CD4-positive, alpha-beta memory T cell (primary cell): ENCODE measurements at regions of chr7 and their contacts with region 1.

Region 1: DNA sequence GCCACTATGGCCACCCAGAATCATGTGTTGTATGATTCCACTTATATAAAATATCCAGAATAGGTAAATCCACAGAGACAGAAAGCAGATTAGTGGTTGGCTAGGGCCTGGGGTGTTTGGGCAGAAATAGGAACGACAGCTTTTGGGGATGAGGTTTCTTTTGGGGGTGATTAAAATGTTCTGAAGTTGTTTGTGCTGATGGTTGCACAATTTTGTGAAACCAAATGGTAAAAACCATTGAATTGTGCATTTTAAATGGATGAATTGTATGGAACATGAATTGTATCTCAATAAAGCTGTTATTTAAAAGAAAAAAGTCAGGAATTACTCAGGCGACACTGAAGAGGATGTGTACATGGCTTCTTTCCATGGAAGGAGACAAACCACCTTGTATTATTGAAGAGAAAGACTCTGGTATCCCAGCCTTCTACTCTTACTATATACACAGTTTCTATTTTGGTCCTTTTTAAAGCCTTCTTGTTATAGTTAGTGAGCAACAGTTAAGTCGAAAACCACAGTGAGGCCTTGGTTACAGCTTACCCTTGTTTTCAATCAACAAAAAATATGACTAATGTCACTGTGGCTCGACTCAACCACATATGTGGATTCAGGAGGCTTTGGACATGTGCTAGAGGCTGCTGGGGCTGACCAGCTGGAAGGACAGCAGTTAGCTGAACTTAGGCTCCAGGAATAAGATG is 57.1 kb upstream of the KMT2E start:
- DNase-seq: peak; percentile 25 to 61 (median 39)
- H3K4me3 ChIP-seq: no peak overlapping the region
- H3K4me3 Mint-ChIP-seq: peak overlapping the region in 3 of 8 donors; percentile 10 to 60 (median 10)
- H3K27ac ChIP-seq: no peak overlapping the region
- H3K27ac Mint-ChIP-seq: peak overlapping the region; percentile 63 to 97 (median 94)
- H3K4me1 ChIP-seq: peaks cover 13% of the 10 kb centered on the region
- H3K4me1 Mint-ChIP-seq: peaks cover 13 to 19% (median 15%) of the 10 kb centered on the region in 4 donors
- H3K27me3 ChIP-seq: no peaks in the 10 kb centered on the region
- H3K27me3 Mint-ChIP-seq: no peaks in the 10 kb centered on the region

Region 2: GRCh38 chr7:104914421-104914820 is 42.5 kb before region 1 on chr7:
- CTCF ChIA-PET with region 1: no interaction called
- POLR2A ChIA-PET with region 1: no interaction called
- intact Hi-C with region 1: no loop called
- DNase-seq: no peak
- H3K4me3 ChIP-seq: no peak overlapping the region
- H3K4me3 Mint-ChIP-seq: no peak overlapping the region
- H3K27ac ChIP-seq: no peak overlapping the region
- H3K27ac Mint-ChIP-seq: no peak overlapping the region
- H3K4me1 ChIP-seq: no peaks in the 10 kb centered on the region
- H3K4me1 Mint-ChIP-seq: peaks cover 0 to 4% (median 0%) of the 10 kb centered on the region in 4 donors
- H3K27me3 ChIP-seq: peaks cover 4% of the 10 kb centered on the region
- H3K27me3 Mint-ChIP-seq: peaks cover 3 to 4% of the 10 kb centered on the region in 2 donors

Region 3: DNA sequence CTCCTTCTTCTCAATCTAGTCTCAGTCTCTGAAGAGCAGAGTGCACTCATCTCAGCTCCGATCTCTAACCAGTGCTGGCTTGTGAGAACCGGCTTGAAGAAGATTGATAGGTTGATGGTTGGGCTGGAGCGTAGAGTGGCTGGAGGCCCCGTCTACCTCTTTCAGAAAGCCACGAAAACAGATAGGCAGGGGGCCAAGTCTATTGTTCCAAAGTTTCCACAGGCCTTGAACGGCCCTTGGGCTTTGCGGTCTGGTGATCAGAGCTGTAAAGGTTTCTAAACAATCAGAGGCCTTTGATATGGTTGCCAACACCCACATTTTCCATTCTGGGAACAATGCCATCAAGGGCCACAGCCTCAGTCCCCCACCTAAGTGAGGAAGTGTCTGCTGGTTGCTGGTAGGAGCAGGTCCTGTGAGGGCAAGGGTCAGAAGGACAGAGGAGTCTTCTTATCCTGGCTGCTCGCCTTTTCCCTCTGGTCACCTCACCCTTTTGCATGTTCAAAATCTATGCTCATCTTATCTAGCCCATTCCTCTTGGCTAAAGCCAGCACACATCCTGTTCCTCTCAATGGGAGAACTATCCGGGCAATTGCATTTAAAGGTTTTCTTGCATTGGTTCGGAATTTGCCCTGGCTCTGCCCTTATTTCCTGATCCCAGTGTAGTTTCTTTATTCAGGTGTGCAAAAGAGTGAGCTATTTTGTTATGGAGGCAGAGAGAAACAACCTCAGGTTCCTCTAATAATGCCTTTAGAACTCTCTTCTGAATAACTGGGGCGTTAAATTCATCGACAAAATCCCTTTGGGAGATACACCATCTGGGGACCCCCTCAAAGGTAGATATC is 13.2 kb before region 1 on chr7:
- CTCF ChIA-PET with region 1: no interaction called
- POLR2A ChIA-PET with region 1: interaction called, 15 read pairs
- intact Hi-C with region 1: no loop called
- DNase-seq: peak; percentile 75 to 92 (median 81)
- H3K4me3 ChIP-seq: peak overlapping the region; percentile 1 to 15
- H3K4me3 Mint-ChIP-seq: peak overlapping the region; percentile 82 to 92 (median 88)
- H3K27ac ChIP-seq: peak overlapping the region; percentile 94
- H3K27ac Mint-ChIP-seq: peak overlapping the region; percentile 100
- H3K4me1 ChIP-seq: peaks cover 59% of the 10 kb centered on the region
- H3K4me1 Mint-ChIP-seq: peaks cover 45 to 71% (median 58%) of the 10 kb centered on the region in 4 donors
- H3K27me3 ChIP-seq: no peaks in the 10 kb centered on the region
- H3K27me3 Mint-ChIP-seq: peaks cover 0 to 1% of the 10 kb centered on the region in 2 donors

Region 4: DNA sequence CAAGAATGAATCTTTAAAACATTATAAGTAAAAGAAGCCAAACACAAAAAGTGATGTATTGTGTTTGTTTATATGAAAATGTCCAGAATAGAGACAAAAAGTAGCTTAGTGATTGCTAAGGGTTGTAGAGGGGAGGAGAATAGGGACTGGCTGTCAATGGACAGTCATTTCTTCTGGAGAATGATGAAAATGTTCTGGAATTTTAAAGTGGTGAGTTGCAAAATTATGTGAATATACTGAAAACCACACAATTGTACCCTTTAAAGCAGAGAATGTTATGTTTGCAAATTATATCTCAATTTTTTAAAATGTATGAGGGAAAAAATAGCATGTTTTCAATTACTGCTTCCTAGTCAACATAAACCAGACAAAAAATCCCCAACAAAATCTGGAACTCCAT is 231.3 kb after region 1 on chr7:
- CTCF ChIA-PET with region 1: no interaction called
- POLR2A ChIA-PET with region 1: no interaction called
- intact Hi-C with region 1: no loop called
- DNase-seq: no peak
- H3K4me3 ChIP-seq: no peak overlapping the region
- H3K4me3 Mint-ChIP-seq: no peak overlapping the region
- H3K27ac ChIP-seq: no peak overlapping the region
- H3K27ac Mint-ChIP-seq: peak overlapping the region in 2 of 7 donors; percentile 30 to 61
- H3K4me1 ChIP-seq: no peaks in the 10 kb centered on the region
- H3K4me1 Mint-ChIP-seq: peaks cover 15 to 32% (median 22%) of the 10 kb centered on the region in 4 donors
- H3K27me3 ChIP-seq: no peaks in the 10 kb centered on the region
- H3K27me3 Mint-ChIP-seq: no peaks in the 10 kb centered on the region